A549 (cell line): ENCODE measurements at regions of chr14 and their contacts with region 1.

Region 1: GRCh38 chr14:73662487-73662943 is 17.7 kb downstream of the DNAL1 start:
- DNase-seq: peak; percentile 53 to 90
- ATAC-seq: peak; percentile 100
- H3K4me3 ChIP-seq: no peak overlapping the region
- H3K27ac ChIP-seq: peak overlapping the region; percentile 55 to 69; a peak in 4 of 6 replicates
- H3K4me1 ChIP-seq: peaks cover 35% of the 10 kb centered on the region
- CTCF ChIP-seq: peak; percentile 52
- EP300 ChIP-seq: no peak
- POLR2A ChIP-seq: no peak
- RAD21 ChIP-seq: peak; percentile 47 to 49

Region 2: GRCh38 chr14:73644531-73645247 is 17.8 kb before region 1 on chr14 and contains the start of gene DNAL1:
- CTCF ChIA-PET with region 1: interaction called, 23 read pairs
- POLR2A ChIA-PET with region 1: no interaction called
- DNase-seq: peak; percentile 89 to 95
- ATAC-seq: peak; percentile 99
- H3K4me3 ChIP-seq: peak within 1 kb of the TSS; percentile 70
- H3K27ac ChIP-seq: peak within 1 kb of the TSS; percentile 81 to 83
- H3K4me1 ChIP-seq: peaks cover 14% of the 10 kb centered on the region
- CTCF ChIP-seq: no peak
- EP300 ChIP-seq: no peak
- POLR2A ChIP-seq: peak; percentile 90
- RAD21 ChIP-seq: no peak
- polyA plus RNA-seq, gene DNAL1: 9.2 and 16.3 TPM in 2 replicates

Region 3: DNA sequence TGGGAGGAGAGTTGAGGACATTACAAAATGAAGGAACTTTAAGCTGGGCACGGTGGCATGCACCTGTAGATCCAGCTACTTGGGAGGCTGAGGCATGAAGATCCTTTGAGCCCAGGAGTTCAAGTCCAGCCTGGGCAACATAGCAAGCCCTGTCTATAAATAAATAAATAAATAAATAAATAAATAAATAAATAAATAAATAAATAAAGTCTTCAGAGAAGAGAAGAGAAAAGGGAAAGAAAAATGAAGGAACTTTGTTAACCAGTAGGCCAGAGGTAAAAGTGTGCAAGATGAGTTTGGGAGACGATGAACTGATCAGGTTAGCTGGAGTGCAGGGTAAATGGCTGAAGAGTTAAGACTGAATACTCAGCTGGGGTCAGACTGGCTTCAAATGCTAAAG is 31.6 kb after region 1 on chr14:
- CTCF ChIA-PET with region 1: no interaction called
- POLR2A ChIA-PET with region 1: no interaction called
- DNase-seq: no peak
- ATAC-seq: no peak
- H3K4me3 ChIP-seq: no peak overlapping the region
- H3K27ac ChIP-seq: no peak overlapping the region
- H3K4me1 ChIP-seq: peaks cover 12% of the 10 kb centered on the region
- CTCF ChIP-seq: no peak
- EP300 ChIP-seq: no peak
- POLR2A ChIP-seq: no peak
- RAD21 ChIP-seq: no peak